RWPE1 (cell line): ENCODE measurements at regions of chr11 and their contacts with region 1.

Region 1: GRCh38 chr11:119181677-119182412 is 3.4 kb upstream of the NHERF4 start:
- DNase-seq: no peak
- H3K27ac ChIP-seq: no peak overlapping the region
- CTCF ChIP-seq: no peak

Region 2: GRCh38 chr11:117583063-117583801 is 1598.6 kb before region 1 on chr11:
- CTCF ChIA-PET with region 1: no interaction called
- POLR2A ChIA-PET with region 1: no interaction called
- DNase-seq: no peak
- H3K27ac ChIP-seq: no peak overlapping the region
- CTCF ChIP-seq: no peak

Region 3: DNA sequence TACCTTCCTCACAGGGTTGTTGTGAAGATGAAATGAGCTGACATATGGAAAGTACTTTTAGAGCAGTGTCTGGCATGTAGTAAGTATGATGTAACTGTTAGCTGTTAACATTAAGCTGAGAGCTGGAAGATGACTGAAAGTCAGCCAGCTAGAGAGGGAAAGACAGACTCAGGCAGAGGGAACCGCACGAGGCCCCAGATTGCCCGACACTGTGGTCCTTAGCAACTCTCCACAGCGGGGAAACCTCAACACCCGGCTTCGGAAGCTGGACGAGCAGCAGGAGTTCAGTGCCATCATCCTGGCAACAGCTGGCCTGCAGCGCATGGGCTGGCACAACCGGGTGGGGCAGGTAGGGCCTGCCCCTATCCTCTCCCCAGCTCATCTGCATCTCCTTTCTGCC is 90.7 kb before region 1 on chr11:
- CTCF ChIA-PET with region 1: no interaction called
- POLR2A ChIA-PET with region 1: no interaction called
- DNase-seq: no peak
- H3K27ac ChIP-seq: peak overlapping the region; percentile 73
- CTCF ChIP-seq: no peak

Region 4: GRCh38 chr11:119121008-119121810 is 60.6 kb before region 1 on chr11 and contains the start of gene HINFP:
- CTCF ChIA-PET with region 1: no interaction called
- POLR2A ChIA-PET with region 1: no interaction called
- DNase-seq: peak; percentile 97
- H3K27ac ChIP-seq: peak within 1 kb of the TSS; percentile 82
- CTCF ChIP-seq: no peak

Region 5: GRCh38 chr11:119168471-119169281 is 13.2 kb before region 1 on chr11 and contains the start of gene NLRX1:
- CTCF ChIA-PET with region 1: interaction called, 3 read pairs
- POLR2A ChIA-PET with region 1: interaction called, 10 read pairs
- DNase-seq: peak; percentile 82
- H3K27ac ChIP-seq: peak within 1 kb of the TSS; percentile 91
- CTCF ChIP-seq: peak; percentile 93